Posterior vena cava (tissue), 2 donors: ENCODE measurements at regions of chr12 and their contacts with region 1.

Region 1: GRCh38 chr12:50637870-50638481 is 125.9 kb upstream of the ATF1 start:
- DNase-seq: no peak

Region 2: DNA sequence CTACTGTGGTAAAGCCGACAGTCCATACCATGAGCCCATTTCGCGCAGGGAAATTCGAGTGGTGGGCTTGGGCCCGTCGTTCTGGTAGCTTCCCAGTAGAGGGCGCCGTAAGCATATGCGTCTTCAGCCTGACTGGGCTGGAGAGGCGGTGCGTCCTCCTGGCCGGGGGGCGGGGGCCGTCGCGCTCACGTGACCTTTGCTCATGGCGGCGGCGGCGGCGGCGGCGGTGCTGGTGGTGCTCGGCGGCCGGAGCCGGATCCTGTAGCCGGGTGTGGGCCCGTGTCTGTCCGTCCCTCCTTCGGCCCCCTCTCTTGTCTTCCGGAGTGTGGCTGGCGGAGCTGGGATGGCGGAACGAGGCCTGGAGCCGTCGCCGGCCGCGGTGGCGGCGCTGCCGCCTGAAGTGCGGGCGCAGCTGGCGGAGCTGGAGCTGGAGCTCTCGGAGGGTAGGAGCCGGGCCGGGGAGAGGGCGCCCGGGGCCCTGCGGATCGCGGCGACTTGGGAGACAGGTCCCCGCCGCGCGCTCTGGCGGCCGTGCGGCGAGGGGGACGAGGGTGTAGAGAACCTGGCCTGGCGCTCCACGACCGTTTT is 133.1 kb before region 1 on chr12 and contains the start of gene DIP2B:
- intact Hi-C with region 1: loop called (anchors 5 kb)
- DNase-seq: peak; percentile 99
- total RNA-seq, gene DIP2B: 13.7 to 14.0 TPM

Region 3: GRCh38 chr12:50699940-50700339 is 62.0 kb after region 1 on chr12:
- intact Hi-C with region 1: no loop called
- DNase-seq: no peak